Activated naive CD4-positive, alpha-beta T cell treated with anti-CD3 and anti-CD28 coated beads for 36 hours (primary cell): ENCODE measurements at regions of chr12 and their contacts with region 1.

Region 1: GRCh38 chr12:48865434-48866290 is at the start of gene RND1:
- DNase-seq: peak; percentile 93
- H3K4me3 Mint-ChIP-seq: peak within 1 kb of the TSS; percentile 87
- H3K27ac Mint-ChIP-seq: peak within 1 kb of the TSS; percentile 62
- H3K4me1 Mint-ChIP-seq: peaks cover 22% of the 10 kb centered on the region
- H3K27me3 Mint-ChIP-seq: peaks cover 22% of the 10 kb centered on the region
- total RNA-seq, gene RND1: 6.8 to 7.4 TPM

Region 2: GRCh38 chr12:48681738-48682532 is 183.7 kb before region 1 on chr12 and contains the start of gene KANSL2:
- CTCF ChIA-PET with region 1: no interaction called
- intact Hi-C with region 1: loop called (anchors 1 kb)
- DNase-seq: peak; percentile 99
- H3K4me3 Mint-ChIP-seq: peak within 1 kb of the TSS; percentile 98
- H3K27ac Mint-ChIP-seq: peak within 1 kb of the TSS; percentile 93
- H3K4me1 Mint-ChIP-seq: peaks cover 49% of the 10 kb centered on the region
- H3K27me3 Mint-ChIP-seq: no peaks in the 10 kb centered on the region
- total RNA-seq, gene KANSL2: 37.9 to 39.1 TPM

Region 3: GRCh38 chr12:48824112-48824511 is 41.5 kb before region 1 on chr12:
- CTCF ChIA-PET with region 1: no interaction called
- intact Hi-C with region 1: no loop called
- DNase-seq: no peak
- H3K4me3 Mint-ChIP-seq: no peak overlapping the region
- H3K27ac Mint-ChIP-seq: no peak overlapping the region
- H3K4me1 Mint-ChIP-seq: no peaks in the 10 kb centered on the region
- H3K27me3 Mint-ChIP-seq: no peaks in the 10 kb centered on the region

Region 4: GRCh38 chr12:48924617-48925303 is 59.1 kb after region 1 on chr12:
- CTCF ChIA-PET with region 1: interaction called, 5 read pairs
- intact Hi-C with region 1: loop called (anchors 2 kb)
- DNase-seq: peak; percentile 81
- H3K4me3 Mint-ChIP-seq: peak overlapping the region; percentile 91
- H3K27ac Mint-ChIP-seq: peak overlapping the region; percentile 96
- H3K4me1 Mint-ChIP-seq: peaks cover 49% of the 10 kb centered on the region
- H3K27me3 Mint-ChIP-seq: no peaks in the 10 kb centered on the region